ENCODE measurements at regions of chr17 and their contacts with region 1.

Region 1: GRCh38 chr17:57130761-57131461 is 45.9 kb downstream of the AKAP1 start:
- DNase-seq: peak; percentile 79
- H3K4me3 ChIP-seq: peak overlapping the region; percentile 63
- H3K27ac ChIP-seq: no peak overlapping the region
- H3K4me1 ChIP-seq: no peaks in the 10 kb centered on the region
- H3K27me3 ChIP-seq: no peaks in the 10 kb centered on the region; the same call in 1 of the 2 replicates

Region 2: GRCh38 chr17:56939901-56940343 is 191.0 kb before region 1 on chr17:
- in situ Hi-C with region 1: no loop called
- DNase-seq: peak; percentile 58
- H3K4me3 ChIP-seq: no peak overlapping the region
- H3K27ac ChIP-seq: no peak overlapping the region
- H3K4me1 ChIP-seq: peaks cover 6% of the 10 kb centered on the region
- H3K27me3 ChIP-seq: no peaks in the 10 kb centered on the region

Region 3: DNA sequence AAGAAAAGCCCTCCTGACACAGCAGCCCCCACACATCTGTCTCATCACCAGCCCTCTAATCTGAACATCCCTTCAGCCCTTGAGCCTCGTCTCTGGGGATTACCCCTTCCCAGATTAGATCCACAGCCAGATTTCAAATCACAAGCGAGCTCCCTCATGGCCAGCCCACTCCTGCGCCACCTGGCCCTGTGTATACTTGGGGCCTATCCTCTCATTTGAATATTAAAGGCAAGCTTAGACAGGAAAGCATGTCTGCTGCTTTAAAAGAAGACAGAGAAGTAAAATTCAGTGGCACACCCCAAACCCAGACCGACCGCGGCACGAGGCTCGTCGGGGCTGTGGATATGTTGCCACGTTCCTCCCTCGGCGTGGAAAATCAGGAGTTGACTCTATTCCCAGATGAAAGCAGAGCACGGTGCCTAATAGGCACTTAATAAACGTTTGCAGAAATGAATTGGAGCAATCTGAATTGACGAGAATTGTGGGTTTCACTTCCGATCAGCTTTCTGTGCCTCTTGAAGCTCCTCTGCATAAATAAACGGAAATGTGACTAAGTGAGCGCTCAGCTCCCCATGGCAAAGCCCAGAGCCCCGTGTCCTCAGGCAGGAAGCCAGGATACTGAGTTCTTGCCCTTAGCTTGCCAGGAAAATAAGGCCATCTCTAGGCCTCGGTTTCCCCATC is 506.2 kb after region 1 on chr17:
- in situ Hi-C with region 1: no loop called
- DNase-seq: no peak
- H3K4me3 ChIP-seq: no peak overlapping the region
- H3K27ac ChIP-seq: no peak overlapping the region
- H3K4me1 ChIP-seq: no peaks in the 10 kb centered on the region
- H3K27me3 ChIP-seq: no peaks in the 10 kb centered on the region

Region 4: DNA sequence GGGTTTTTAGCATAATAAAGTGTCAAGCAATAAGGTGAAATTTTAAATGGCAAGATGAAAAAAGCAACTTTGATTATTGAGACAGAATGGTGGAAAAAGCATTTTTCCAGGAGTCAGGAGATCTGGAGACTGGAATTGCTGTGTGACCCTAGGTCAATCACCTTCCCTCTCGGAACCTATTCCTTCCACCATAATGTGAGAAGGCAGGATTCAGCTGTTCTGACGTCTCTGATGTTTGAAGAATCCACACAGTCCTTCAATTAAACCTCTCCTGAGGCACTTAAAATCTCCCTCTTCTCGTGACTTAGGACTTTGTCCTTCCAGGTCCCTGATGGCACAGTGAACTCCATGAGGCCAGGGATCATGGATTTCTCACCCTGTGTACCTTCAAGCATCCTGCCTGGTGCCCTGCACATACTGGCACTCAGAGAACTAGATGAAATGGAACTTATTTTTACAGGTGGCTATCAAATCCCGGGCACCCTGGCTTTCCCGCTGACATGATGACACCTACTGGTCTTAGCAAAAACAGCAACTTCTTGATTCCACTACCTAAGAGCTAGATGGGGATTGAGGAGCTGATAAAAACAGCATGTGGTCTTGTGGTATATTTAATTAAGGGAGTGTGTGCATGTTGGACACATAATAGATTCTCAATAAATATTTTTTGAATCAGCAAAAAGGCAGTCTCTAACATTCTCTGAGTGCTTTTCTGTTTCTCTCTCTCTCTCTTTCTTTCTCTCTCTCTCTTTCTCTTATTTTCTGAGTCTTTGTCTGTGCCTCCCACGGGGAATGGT is 616.5 kb after region 1 on chr17:
- in situ Hi-C with region 1: loop called (anchors 10 kb)
- DNase-seq: peak; percentile 74
- H3K4me3 ChIP-seq: no peak overlapping the region
- H3K27ac ChIP-seq: no peak overlapping the region
- H3K4me1 ChIP-seq: no peaks in the 10 kb centered on the region
- H3K27me3 ChIP-seq: peaks cover 29% of the 10 kb centered on the region

Region 5: GRCh38 chr17:57823469-57824401 is 692.8 kb after region 1 on chr17:
- in situ Hi-C with region 1: loop called (anchors 10 kb)
- DNase-seq: peak; percentile 58
- H3K4me3 ChIP-seq: no peak overlapping the region
- H3K27ac ChIP-seq: no peak overlapping the region
- H3K4me1 ChIP-seq: peaks cover 12% of the 10 kb centered on the region; the same call in 1 of the 2 replicates
- H3K27me3 ChIP-seq: peaks cover 14% of the 10 kb centered on the region